Heart left ventricle (tissue), 16 donors: ENCODE measurements at regions of chr9 and their contacts with region 1.

Region 1: DNA sequence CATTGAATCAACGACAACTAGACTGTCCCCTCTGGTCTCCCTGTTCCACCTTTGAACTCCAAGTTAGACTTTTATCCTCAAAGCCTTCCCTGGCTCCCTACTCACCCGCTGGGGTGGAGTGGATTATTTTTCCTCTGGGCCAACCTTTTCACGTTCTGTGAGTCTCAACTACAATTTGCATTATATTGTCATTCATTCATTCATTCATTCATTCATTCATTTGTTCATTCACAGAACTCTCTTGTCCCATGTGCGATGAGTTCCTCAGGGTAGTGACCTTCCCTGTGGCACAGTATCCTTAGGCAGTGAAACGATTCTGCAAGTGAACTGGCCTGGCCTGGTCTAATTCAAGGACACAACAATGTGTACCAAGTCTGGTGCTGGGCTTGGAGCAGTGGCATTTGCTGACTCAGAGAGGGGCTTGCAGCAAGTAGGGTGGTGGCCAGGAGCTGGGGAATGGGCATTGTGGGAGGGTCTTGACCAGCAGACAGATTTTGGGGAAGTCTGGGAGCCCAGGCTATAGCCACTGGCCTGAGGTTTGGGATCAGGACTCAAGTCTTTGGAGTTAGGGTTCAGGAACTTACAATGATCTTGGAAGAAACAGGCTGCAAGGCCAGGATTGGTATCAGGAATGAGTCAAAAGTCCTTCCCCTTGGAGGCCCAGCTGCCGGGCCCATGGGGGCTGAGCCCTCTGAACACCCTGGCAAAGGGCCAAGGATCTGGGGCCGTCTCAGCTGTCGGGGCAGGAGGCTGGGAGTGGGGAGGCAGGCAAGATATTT is 37.3 kb upstream of the COL15A1 start:
- DNase-seq: peak; percentile 43 to 86 (median 77)
- ATAC-seq: peak in 2 of 4 donors; percentile 18 to 52
- H3K4me3 ChIP-seq: no peak overlapping the region
- H3K27ac ChIP-seq: peak overlapping the region in 11 of 12 donors; percentile 3 to 86 (median 52)
- H3K4me1 ChIP-seq: peaks cover 3 to 56% (median 34%) of the 10 kb centered on the region in 12 donors
- H3K27me3 ChIP-seq: no peaks in the 10 kb centered on the region
- CTCF ChIP-seq: no peak
- POLR2A ChIP-seq: no peak

Region 2: DNA sequence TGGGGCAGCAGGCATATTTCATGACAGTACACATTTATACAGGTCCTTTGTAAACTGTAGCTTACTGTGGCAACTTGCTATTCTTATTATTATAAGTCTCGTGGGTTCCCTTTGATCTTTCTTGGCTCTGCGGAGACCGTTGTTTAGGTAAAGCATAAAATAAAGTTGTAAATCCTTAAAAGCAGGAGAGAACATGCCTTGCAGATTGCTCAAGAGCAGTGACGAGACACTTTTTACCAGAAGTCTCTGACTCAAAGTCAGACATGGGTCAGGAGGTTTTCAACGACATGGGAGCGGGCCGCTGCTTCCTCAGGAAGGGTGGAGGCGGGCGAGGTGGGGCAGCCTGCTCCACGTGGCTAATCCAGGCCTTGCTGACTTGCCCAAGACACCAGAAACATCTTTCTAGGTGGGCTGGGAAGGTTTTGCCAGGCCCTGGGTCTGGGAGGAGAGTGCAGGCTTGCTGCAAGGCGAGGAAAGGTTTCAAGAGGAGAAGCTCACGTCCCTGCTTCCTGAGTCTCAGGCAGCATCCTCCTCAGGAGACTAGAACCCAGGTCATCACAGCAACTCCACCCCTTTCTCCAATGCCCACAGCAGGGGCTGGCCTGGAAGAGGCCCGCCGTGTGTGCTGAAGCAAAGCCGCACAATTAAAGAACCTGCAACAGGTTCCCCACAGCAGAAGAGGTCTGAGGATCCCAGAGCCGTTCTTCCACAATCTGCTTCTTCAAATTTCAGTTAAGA is 657.5 kb before region 1 on chr9:
- intact Hi-C with region 1: no loop called
- DNase-seq: peak; percentile 59 to 82 (median 69)
- ATAC-seq: peak; percentile 66 to 96 (median 90)
- H3K4me3 ChIP-seq: no peak overlapping the region
- H3K27ac ChIP-seq: peak overlapping the region in 11 of 12 donors; percentile 5 to 94 (median 49)
- H3K4me1 ChIP-seq: peaks cover 0 to 63% (median 7%) of the 10 kb centered on the region in 12 donors
- H3K27me3 ChIP-seq: no peaks in the 10 kb centered on the region
- CTCF ChIP-seq: no peak
- POLR2A ChIP-seq: no peak

Region 3: DNA sequence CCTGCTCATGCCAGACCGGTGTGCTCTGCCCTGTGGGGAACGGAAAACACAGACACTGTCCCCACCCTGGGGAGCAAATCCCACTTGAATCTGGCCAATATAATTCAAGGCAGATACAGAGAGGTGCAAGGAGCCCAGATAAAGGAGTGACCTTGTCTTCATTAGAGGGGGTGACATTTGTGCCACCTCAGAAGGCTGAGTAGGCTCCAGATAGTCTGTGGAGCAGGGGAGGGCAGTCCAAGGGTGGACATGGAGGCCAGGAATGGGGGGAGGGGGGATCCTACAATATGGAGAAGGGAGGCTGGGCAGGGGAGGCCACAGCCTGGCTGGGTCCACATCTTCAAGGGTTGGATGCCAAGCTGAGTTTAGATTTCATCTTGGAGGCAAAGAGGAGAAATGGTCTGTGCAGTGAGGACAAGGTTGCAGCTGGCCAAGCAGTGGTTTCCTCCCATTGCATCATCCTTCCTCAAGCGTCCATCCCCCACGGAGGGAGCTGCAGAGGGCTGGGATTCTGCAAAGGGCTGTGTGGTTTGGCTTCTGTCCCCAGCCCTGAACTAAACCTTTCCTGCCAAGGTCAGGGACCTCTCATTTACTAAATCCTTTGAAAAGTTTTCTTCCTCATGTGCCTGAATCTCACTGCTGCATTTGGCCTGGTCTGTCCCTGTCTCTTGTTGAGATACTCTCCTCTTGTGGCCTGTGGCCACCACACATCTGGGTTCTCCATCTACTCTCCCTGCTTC is 38.9 kb before region 1 on chr9:
- intact Hi-C with region 1: loop called in 3 of 10 experiments (anchors 2 to 5 kb)
- DNase-seq: peak; percentile 86 to 93 (median 87)
- ATAC-seq: peak; percentile 84 to 92 (median 88)
- H3K4me3 ChIP-seq: no peak overlapping the region
- H3K27ac ChIP-seq: peak overlapping the region; percentile 43 to 92 (median 81)
- H3K4me1 ChIP-seq: peaks cover 0 to 71% (median 53%) of the 10 kb centered on the region in 12 donors
- H3K27me3 ChIP-seq: no peaks in the 10 kb centered on the region
- CTCF ChIP-seq: no peak
- POLR2A ChIP-seq: no peak

Region 4: DNA sequence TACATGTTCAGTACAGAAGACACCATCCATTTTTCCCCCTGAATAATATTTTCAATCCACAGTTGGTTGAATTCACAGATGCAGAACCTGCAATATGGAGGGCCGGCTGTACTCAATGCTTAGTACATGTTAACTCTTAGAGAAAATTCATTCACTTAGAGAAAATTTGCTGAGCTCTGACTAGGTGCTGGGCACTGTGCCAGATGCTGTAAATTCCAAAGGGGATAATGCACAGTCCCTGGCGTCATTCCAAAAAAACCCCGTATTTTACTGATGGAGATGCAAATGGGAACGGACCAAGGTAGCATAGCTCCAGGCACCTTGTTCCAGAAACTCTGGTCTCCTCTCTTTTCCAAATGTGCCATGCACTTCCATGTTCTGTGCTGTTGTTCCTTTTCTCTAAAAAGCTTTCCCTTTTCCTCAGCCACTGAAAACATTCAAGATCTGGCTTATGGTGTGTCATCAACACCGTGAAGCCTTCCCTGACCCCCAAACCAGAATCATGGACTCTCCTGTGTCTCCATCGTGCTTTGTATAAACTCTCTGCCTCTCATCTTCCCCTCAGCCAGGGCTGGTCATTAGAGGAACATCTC is 18.4 kb before region 1 on chr9:
- intact Hi-C with region 1: loop called in 2 of 10 experiments (anchors 1 to 2 kb)
- DNase-seq: no peak
- ATAC-seq: no peak
- H3K4me3 ChIP-seq: no peak overlapping the region
- H3K27ac ChIP-seq: peak overlapping the region in 9 of 12 donors; percentile 8 to 82 (median 70)
- H3K4me1 ChIP-seq: peaks cover 0 to 80% (median 52%) of the 10 kb centered on the region in 12 donors
- H3K27me3 ChIP-seq: no peaks in the 10 kb centered on the region
- CTCF ChIP-seq: no peak
- POLR2A ChIP-seq: no peak

Region 5: GRCh38 chr9:98951967-98952366 is 45.5 kb after region 1 on chr9:
- intact Hi-C with region 1: no loop called
- DNase-seq: no peak
- ATAC-seq: no peak
- H3K4me3 ChIP-seq: no peak overlapping the region
- H3K27ac ChIP-seq: no peak overlapping the region
- H3K4me1 ChIP-seq: peaks cover 0 to 24% (median 5%) of the 10 kb centered on the region in 12 donors
- H3K27me3 ChIP-seq: no peaks in the 10 kb centered on the region
- CTCF ChIP-seq: no peak
- POLR2A ChIP-seq: no peak